BJ (cell line): ENCODE measurements at regions of chr16 and their contacts with region 1.

Region 1: DNA sequence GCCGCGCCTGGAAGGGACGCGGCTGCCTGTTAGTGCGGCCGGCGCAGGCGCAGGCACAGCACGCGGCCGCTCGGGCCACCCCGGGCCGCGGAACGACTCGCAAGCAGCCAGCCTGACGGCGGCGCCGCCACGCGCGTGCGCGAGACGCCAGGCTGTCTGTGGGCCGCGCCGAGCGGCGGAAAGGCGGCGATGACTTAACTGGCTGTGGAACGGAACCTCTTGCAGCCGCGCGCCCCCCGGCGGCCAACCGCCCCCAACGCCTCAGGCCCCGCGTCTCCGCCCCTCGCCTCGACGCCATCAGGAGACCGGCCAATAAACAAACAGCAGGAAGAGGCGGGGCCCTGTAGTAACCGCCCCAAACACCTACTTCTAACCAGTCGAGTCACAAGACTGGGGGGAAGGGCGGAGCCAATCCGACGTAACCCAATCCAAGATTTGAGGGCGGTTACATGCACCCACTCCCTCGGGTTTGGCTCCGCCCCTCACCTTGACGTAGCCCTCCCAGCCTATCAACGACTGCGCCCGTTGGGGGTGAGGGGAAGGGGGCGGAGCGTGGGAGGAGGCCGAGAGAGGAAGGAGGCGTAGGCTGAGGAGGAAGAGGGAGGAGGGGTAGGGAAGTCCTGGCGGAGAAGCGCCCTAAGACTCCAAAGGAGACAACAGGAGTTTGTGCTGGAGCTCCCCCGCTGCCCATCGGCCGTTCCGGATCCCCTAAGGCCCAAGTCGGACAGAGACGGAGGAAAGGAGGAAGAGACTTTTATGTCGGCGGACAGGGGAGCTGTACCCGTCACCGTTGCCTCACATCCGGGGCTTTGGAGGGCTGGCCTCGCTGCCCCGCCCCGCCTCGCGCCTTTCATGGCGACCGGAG is at the start of gene FBRS:
- DNase-seq: peak; percentile 100
- H3K4me3 ChIP-seq: peak within 1 kb of the TSS; percentile 90
- H3K27me3 ChIP-seq: no peaks in the 10 kb centered on the region
- CTCF ChIP-seq: peak; percentile 68
- polyA plus RNA-seq, gene FBRS: 7.8 and 9.4 TPM in 2 replicates

Region 2: DNA sequence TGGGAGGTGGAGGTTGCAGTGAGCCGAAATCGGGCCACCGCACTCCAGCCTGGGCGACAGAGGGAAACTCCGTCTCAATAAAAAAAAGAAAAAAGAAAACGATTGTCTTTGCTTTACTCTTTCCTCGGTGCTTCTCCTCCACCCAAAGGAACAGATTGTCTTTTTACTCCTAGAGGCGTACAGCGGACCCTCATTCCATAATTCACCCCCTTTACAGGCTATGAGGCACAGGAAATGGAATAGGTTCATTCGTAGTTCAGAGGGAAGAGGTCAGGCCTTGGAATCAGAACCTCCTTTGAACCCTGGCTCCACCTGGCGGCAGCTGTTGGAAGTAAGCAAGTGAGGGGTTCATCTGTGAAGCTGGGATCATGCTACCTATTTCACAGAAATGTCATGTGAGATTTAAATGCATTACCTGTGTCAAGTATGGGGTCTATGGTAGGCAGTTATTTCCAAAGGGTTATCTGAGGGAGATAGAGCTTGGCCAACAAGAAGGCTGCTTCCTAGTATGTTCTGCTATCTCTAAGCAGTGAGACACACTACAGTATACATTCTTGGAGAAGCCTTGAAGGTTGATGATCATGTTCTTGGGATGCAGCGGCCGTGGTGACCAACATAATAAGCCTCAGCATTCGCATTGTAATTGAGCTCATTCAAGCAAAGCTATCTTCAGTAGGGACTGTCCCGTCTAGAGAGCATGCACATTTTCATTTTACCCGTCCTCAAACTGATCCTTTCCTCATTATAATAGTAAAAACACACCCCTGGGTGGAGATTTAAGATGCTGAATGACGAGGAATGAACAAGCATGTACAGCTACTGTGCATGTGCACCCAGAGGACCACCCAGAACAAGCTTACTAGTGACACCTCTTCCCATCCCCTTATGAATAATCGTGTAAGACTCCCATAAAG is 29.2 kb before region 1 on chr16:
- CTCF ChIA-PET with region 1: no interaction called
- POLR2A ChIA-PET with region 1: interaction called, 16 read pairs
- DNase-seq: no peak
- H3K4me3 ChIP-seq: no peak overlapping the region
- H3K27me3 ChIP-seq: no peaks in the 10 kb centered on the region
- CTCF ChIP-seq: peak; percentile 95

Region 3: GRCh38 chr16:30669896-30670797 is 12.0 kb after region 1 on chr16:
- CTCF ChIA-PET with region 1: interaction called, 11 read pairs
- POLR2A ChIA-PET with region 1: no interaction called
- DNase-seq: no peak
- H3K4me3 ChIP-seq: no peak overlapping the region
- H3K27me3 ChIP-seq: no peaks in the 10 kb centered on the region
- CTCF ChIP-seq: no peak

Region 4: DNA sequence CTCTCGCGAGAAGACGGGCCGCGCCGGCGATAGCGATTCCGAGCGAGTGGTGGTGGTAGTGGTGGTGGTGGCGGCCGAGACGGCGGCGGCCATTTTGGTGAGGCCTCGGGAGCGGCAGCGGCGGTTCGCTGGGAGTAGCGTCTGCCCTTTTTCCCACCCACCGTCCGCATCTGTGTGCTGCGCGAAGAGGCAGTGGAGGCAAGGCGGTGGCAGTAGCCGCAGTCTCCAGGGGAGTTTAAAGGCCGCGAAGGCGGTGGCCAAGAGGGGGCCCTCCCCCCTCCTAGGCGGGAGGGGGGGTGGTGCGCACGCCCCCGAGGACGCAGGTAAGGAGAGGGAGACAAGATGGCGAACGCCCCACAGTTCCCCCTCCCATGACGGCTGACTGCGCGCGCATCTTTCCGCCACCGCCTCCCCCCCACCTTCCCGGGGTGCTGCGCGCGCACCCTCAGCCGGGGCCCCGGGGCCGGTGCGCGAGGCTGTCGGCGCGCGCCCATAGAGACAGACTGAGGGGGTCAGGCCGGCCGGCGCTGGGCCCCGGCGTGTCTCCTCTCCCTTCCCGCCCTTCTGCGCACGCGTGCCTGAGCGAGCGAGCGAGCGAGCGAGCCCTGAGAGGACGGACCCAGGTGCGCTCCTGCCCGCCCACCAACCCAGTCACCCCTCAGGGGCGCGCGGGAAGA is 40.2 kb after region 1 on chr16:
- CTCF ChIA-PET with region 1: interaction called, 43 read pairs
- POLR2A ChIA-PET with region 1: interaction called, 3 read pairs
- DNase-seq: peak; percentile 69
- H3K4me3 ChIP-seq: peak overlapping the region; percentile 91
- H3K27me3 ChIP-seq: no peaks in the 10 kb centered on the region
- CTCF ChIP-seq: no peak